ENCODE measurements at regions of chr6 and their contacts with region 1.

Region 1: DNA sequence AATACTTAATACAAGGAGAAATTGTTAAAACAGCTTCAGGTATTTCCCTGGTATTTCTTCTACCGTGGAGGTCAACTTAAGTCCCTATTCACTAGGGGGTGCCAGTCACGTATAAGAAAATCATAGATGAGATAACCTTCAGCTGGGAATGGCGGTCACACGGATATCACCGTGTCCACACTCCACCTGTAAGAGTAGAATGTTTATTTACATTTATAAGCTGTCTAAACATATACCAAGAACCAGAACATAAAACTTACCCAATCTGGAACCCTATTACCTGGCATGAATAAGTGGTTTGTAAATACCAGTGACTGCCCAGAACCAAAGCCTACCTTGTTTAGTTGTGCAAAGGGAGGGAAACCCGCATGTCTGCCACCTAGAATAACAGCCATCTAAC is 1.9 kb upstream of the ELOVL4 start:
- DNase-seq: peak; percentile 28
- CTCF ChIP-seq: peak; percentile 71

Region 2: GRCh38 chr6:79895382-79896074 is 53.7 kb before region 1 on chr6:
- CTCF ChIA-PET with region 1: no interaction called
- POLR2A ChIA-PET with region 1: no interaction called
- DNase-seq: no peak
- CTCF ChIP-seq: no peak

Region 3: DNA sequence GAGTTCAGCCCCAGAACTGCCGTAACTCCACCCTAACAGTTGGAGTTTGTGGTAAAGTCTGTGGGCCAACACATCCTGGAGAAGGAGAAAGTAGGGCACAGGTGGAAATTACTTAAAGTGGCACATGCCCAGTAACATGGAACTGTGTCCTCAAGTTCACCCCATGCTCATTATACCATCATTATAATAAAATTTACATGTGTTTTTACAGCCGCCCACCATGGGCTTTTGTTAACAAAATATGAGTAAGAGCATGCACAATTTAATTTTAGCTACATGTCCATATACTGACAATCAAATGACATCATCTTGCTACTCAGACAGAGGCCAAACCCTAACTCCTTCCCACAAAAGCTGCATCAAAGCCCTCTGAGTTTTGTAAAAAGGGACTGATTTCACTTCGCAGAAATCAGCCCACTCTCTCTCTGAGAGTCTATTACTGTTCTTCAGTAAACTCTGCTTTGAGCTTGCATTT is 15.4 kb after region 1 on chr6:
- CTCF ChIA-PET with region 1: interaction called, 13 read pairs
- POLR2A ChIA-PET with region 1: no interaction called
- DNase-seq: no peak
- CTCF ChIP-seq: no peak

Region 4: DNA sequence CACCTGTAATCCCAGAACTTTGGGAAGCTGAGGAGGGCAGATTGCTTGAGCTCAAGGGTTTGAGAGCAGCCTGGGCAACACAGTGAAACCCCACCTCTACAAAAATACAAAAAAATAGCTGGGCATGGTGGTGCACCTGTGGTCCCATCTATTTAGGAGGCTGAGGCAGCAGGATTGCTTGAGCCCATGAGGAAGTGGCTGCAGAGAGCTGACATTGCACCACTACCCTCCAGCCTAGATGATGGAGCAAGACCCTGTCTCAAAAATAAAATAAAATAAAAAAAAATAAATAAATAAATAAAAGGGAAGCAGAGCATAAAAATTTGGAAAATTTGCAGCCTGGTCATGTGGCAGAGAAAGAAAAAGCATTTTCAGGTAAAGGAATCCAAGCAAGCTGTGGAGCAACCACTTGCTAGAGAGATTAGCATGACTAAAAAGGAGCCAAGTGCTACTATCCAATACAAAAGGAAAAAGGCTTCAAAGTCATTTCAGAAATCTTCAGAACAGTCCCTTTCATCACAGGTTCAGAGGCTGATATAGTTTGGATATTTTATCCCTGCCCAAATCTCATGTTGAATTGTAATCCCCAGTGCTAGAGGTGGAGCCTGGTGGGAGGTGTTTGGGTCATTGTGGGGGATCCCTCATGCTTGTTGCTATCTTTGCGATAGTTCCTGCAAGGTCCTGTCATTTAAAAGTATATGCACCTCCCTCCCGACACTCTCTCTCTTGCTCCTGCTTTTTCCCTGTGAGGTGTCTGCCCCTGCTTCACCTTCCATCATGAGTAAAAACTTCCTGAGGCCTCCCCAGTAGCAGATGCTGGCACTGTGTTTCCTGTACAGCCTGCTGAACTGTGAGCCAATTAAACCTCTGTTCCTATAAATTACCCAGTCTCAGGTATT is 44.0 kb after region 1 on chr6:
- CTCF ChIA-PET with region 1: interaction called, 10 read pairs
- POLR2A ChIA-PET with region 1: no interaction called
- DNase-seq: no peak
- CTCF ChIP-seq: no peak

Region 5: GRCh38 chr6:80077067-80077466 is 127.8 kb after region 1 on chr6:
- CTCF ChIA-PET with region 1: interaction called, 11 read pairs
- POLR2A ChIA-PET with region 1: no interaction called
- DNase-seq: no peak
- CTCF ChIP-seq: no peak

Region 6: GRCh38 chr6:80088637-80089036 is 139.4 kb after region 1 on chr6:
- CTCF ChIA-PET with region 1: interaction called, 78 read pairs
- POLR2A ChIA-PET with region 1: interaction called, 6 read pairs
- DNase-seq: no peak
- CTCF ChIP-seq: no peak

Region 7: DNA sequence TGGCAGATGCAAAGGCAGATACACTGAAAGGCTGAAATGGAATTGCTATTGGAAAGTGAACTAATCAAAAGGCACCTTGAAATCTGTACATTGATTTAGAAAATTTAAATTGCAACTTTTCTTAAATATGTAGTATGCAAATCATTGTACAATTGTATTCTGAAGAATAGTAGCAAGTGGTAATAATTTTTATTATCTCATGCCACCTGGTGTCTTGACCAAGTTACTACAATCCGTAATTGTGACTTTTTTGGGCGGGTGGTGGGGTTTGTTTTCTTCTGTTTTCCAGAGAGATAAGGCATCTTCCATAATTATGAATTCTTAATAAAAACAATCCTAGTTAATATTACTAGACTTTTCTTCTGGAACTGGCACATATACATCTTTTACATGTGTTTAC is 144.8 kb after region 1 on chr6:
- CTCF ChIA-PET with region 1: interaction called, 78 read pairs
- POLR2A ChIA-PET with region 1: interaction called, 6 read pairs
- DNase-seq: peak; percentile 26
- CTCF ChIP-seq: peak; percentile 30

Region 8: GRCh38 chr6:80388507-80388906 is 439.3 kb after region 1 on chr6:
- CTCF ChIA-PET with region 1: no interaction called
- POLR2A ChIA-PET with region 1: no interaction called
- DNase-seq: no peak
- CTCF ChIP-seq: no peak